Activated T-helper 2 cell treated with anti-CD3 and anti-CD28 coated beads, Interferon-gamma antibody, Interleukin-2, Interleukin-4, amounts not matched to agents 10 μg/mL and 5 μg/mL and 100 μg/mL, durations not matched to agents 14 hours and 24 hours and 36 hours (primary cell): ENCODE measurements at regions of chr4 and their contacts with region 1.

Region 1: GRCh38 chr4:89294573-89295269 is 12.9 kb downstream of the GPRIN3 start:
- DNase-seq: no peak
- H3K4me3 Mint-ChIP-seq: peak overlapping the region; percentile 61
- H3K27ac Mint-ChIP-seq: peak overlapping the region; percentile 96
- H3K4me1 Mint-ChIP-seq: peaks cover 78% of the 10 kb centered on the region
- H3K27me3 Mint-ChIP-seq: no peaks in the 10 kb centered on the region

Region 2: DNA sequence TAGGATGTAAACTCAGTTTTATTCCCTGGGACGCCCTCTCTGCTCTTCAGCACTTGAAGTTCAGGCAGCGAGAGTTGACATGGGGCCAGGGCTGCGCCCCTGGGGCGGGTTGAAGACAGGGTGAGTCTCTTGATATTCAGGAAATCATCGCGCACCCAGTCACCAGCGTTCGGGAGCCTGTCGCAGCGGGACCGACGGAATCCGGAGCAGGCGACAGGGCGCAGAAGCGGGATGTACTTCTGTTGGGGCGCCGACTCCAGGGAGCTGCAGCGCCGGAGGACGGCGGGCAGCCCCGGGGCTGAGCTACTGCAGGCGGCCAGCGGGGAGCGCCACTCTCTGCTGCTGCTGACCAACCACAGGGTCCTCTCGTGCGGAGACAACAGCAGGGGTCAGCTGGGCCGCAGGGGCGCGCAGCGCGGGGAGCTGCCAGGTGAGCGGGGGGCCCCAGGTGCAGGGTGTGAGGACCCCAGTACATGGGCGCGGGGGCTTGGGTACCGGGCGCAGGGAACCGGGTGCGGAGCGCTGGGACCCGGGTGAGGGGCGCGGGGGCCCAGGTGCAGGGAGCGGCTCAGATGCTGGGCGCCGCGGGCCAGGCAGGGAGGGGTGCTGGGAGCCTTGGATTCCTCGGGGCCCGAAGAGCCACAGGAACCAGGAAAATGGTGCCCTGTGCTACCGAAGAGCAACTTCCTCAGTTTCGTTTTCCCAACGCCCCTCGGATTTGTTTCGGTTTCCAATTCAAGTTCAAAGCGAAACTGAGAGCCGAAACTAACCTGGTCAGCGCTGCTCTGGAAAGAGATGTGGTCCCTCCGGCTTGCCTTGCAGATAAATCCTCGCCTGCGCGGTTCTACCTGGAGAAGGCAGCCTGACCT is 915.8 kb before region 1 on chr4 and contains the start of gene HERC6:
- intact Hi-C with region 1: loop called (anchors 5 kb)
- DNase-seq: peak; percentile 83
- H3K4me3 Mint-ChIP-seq: peak within 1 kb of the TSS; percentile 83
- H3K27ac Mint-ChIP-seq: peak within 1 kb of the TSS; percentile 71
- H3K4me1 Mint-ChIP-seq: peaks cover 32% of the 10 kb centered on the region
- H3K27me3 Mint-ChIP-seq: no peaks in the 10 kb centered on the region
- total RNA-seq, gene HERC6: 3.3 and 3.7 TPM in 2 replicates

Region 3: GRCh38 chr4:88803600-88804096 is 491.1 kb before region 1 on chr4:
- intact Hi-C with region 1: loop called (anchors 10 kb)
- DNase-seq: no peak
- H3K4me3 Mint-ChIP-seq: no peak overlapping the region
- H3K27ac Mint-ChIP-seq: no peak overlapping the region
- H3K4me1 Mint-ChIP-seq: peaks cover 10% of the 10 kb centered on the region
- H3K27me3 Mint-ChIP-seq: peaks cover 38% of the 10 kb centered on the region

Region 4: GRCh38 chr4:89273741-89274141 is 21.0 kb before region 1 on chr4:
- intact Hi-C with region 1: loop called (anchors 2 kb)
- DNase-seq: no peak
- H3K4me3 Mint-ChIP-seq: no peak overlapping the region
- H3K27ac Mint-ChIP-seq: no peak overlapping the region
- H3K4me1 Mint-ChIP-seq: peaks cover 47% of the 10 kb centered on the region
- H3K27me3 Mint-ChIP-seq: no peaks in the 10 kb centered on the region

Region 5: DNA sequence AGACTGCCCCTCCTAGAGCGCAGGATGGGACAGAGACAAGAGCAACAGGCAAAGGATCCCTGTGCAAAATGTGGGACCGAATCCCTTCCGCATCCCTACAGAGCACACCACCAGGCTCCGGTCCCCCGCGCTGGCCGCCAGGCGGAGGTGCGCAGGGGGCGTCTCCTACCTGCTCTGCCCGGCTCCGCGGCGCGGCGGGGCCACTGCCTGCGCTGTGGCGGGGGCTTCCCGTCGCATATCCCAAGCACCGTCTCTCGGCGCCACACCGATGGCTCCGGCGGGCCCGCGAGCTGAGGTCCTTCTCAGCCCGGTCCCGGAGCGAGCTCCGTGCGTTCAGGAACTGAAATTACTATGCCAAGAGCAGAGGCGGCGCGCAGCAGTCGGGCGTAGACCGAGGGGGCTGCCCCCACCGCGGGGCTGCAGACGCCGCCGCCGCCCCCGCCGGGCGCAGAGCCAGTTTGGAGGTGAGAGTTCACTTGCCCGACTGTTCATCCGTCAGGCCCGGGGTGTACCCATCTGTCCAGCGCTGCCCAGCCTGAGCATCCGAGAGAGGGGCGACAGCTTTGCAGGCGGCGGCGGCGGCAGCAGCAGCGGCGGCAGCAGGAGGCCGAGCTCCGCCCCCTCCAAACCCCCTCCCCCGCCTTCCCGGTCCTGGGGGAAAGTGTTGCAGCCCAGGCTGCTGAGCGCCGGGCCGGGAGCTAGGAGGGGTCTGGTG is 12.9 kb after region 1 on chr4 and contains the start of gene GPRIN3:
- intact Hi-C with region 1: loop called (anchors 1 kb)
- DNase-seq: peak; percentile 44
- H3K4me3 Mint-ChIP-seq: peak within 1 kb of the TSS; percentile 97
- H3K27ac Mint-ChIP-seq: peak within 1 kb of the TSS; percentile 87
- H3K4me1 Mint-ChIP-seq: peaks cover 60% of the 10 kb centered on the region
- H3K27me3 Mint-ChIP-seq: no peaks in the 10 kb centered on the region
- total RNA-seq, gene GPRIN3: 10.7 and 11.6 TPM in 2 replicates

Region 6: GRCh38 chr4:89324671-89325070 is 29.9 kb after region 1 on chr4:
- intact Hi-C with region 1: no loop called
- DNase-seq: no peak
- H3K4me3 Mint-ChIP-seq: no peak overlapping the region
- H3K27ac Mint-ChIP-seq: peak overlapping the region; percentile 56
- H3K4me1 Mint-ChIP-seq: peaks cover 20% of the 10 kb centered on the region
- H3K27me3 Mint-ChIP-seq: no peaks in the 10 kb centered on the region

Region 7: DNA sequence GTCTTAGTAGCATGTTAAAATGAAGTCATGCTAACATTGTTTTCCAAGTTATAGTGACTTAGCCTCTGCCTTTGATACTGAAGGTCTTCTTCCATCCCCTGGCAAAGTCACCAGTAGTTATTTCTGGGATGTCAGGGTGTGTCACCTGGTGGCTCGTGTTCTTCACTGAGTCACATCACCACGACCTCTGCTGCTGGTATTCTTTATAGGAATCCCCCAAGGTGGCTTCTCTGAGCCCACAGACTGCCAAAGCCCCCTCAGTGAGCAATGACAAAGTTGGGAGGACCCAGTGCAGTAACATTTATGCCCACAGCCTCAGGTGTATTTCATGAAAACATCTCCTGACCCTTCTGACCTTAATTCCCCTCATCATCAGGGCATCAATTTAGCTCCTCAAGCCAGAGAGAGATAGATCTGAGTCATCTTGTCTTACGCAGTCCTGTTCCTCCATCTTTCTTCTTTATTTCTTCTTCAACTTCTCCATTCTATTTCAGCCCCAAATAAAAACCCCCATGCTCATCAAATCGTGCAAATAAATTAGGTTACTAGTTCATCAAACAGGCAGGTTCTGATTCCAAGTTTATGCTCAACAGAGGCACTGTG is 42.2 kb after region 1 on chr4:
- intact Hi-C with region 1: loop called (anchors 5 kb)
- DNase-seq: no peak
- H3K4me3 Mint-ChIP-seq: no peak overlapping the region
- H3K27ac Mint-ChIP-seq: no peak overlapping the region
- H3K4me1 Mint-ChIP-seq: peaks cover 8% of the 10 kb centered on the region
- H3K27me3 Mint-ChIP-seq: peaks cover 19% of the 10 kb centered on the region

Region 8: GRCh38 chr4:89836897-89837384 is 542.2 kb after region 1 on chr4 and contains the start of gene SNCA:
- intact Hi-C with region 1: loop called (anchors 10 kb)
- DNase-seq: peak; percentile 20
- H3K4me3 Mint-ChIP-seq: peak within 1 kb of the TSS; percentile 70
- H3K27ac Mint-ChIP-seq: no peak within 1 kb of the TSS
- H3K4me1 Mint-ChIP-seq: peaks cover 20% of the 10 kb centered on the region
- H3K27me3 Mint-ChIP-seq: peaks cover 67% of the 10 kb centered on the region
- total RNA-seq, gene SNCA: 0.39 and 0.44 TPM in 2 replicates